ENCODE measurements at regions of chr1 and their contacts with region 1.

Region 1: GRCh38 chr1:88655685-88656299 is 28.3 kb upstream of the PKN2 start:
- DNase-seq: no peak
- H3K4me3 ChIP-seq: no peak overlapping the region
- CTCF ChIP-seq: peak; percentile 25

Region 2: DNA sequence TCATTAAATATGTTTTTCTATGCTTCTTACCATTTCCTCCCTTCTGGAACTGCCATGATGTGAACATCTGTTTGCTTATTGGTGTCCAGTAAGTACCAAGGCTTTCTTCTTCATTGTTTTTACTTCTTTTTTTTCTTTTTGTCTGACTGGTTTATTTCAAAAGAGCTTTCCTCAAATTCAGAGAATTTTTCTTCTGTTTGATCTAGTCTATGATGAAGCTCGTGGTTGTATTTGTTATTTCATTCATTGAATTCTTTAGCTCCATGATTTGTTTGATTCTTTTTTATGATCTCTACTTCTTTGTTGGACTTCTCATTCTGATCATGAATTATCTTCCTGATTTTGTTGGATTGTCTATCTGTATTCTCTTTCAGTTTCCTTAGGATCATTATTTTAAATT is 21.3 kb before region 1 on chr1:
- CTCF ChIA-PET with region 1: no interaction called
- POLR2A ChIA-PET with region 1: no interaction called
- DNase-seq: no peak
- H3K4me3 ChIP-seq: no peak overlapping the region
- CTCF ChIP-seq: no peak

Region 3: DNA sequence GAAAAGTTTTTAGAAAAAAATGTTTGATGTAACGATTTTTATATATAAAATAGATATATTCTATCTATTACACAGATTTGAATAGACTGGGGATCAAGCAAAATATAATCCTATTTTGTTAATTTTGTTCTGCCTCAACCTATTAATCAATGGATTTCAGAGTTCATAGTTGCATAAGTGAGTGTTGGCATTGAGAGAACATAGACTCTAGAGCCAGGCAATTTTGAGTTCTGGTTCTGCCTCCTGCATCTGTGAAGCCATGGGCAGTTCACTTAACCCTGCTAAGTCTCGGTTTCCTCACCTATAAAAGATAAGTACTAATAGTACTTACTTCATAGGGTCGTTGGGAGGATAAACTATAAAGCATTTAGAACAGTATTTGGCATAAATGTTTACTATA is 14.7 kb after region 1 on chr1:
- CTCF ChIA-PET with region 1: interaction called, 18 read pairs
- POLR2A ChIA-PET with region 1: no interaction called
- DNase-seq: no peak
- H3K4me3 ChIP-seq: no peak overlapping the region
- CTCF ChIP-seq: no peak

Region 4: GRCh38 chr1:88740784-88741183 is 85.0 kb after region 1 on chr1:
- CTCF ChIA-PET with region 1: no interaction called
- POLR2A ChIA-PET with region 1: no interaction called
- DNase-seq: no peak
- H3K4me3 ChIP-seq: no peak overlapping the region
- CTCF ChIP-seq: no peak

Region 5: GRCh38 chr1:88883156-88883555 is 227.4 kb after region 1 on chr1:
- CTCF ChIA-PET with region 1: interaction called, 155 read pairs
- POLR2A ChIA-PET with region 1: no interaction called
- DNase-seq: no peak
- H3K4me3 ChIP-seq: no peak overlapping the region
- CTCF ChIP-seq: no peak

Region 6: GRCh38 chr1:88917321-88918025 is 261.7 kb after region 1 on chr1:
- CTCF ChIA-PET with region 1: no interaction called
- POLR2A ChIA-PET with region 1: no interaction called
- DNase-seq: no peak
- H3K4me3 ChIP-seq: no peak overlapping the region
- CTCF ChIP-seq: no peak